ENCODE measurements at regions of chr1 and their contacts with region 1.

Region 1: GRCh38 chr1:53945433-53946251 is at the start of gene IFT25:
- DNase-seq: peak; percentile 87 to 98
- H3K4me3 ChIP-seq: peak within 1 kb of the TSS; percentile 80 to 96
- H3K27ac ChIP-seq: peak within 1 kb of the TSS; percentile 77 to 98
- H3K4me1 ChIP-seq: peaks cover 9 to 16% of the 10 kb centered on the region in 2 donors
- H3K27me3 ChIP-seq: no peaks in the 10 kb centered on the region
- CTCF ChIP-seq: no peak
- total RNA-seq, gene IFT25: not detected

Region 2: GRCh38 chr1:52767596-52768280 is 1177.9 kb before region 1 on chr1:
- intact Hi-C with region 1: no loop called
- DNase-seq: no peak
- H3K4me3 ChIP-seq: no peak overlapping the region
- H3K27ac ChIP-seq: no peak overlapping the region
- H3K4me1 ChIP-seq: no peaks in the 10 kb centered on the region
- H3K27me3 ChIP-seq: no peaks in the 10 kb centered on the region
- CTCF ChIP-seq: no peak

Region 3: DNA sequence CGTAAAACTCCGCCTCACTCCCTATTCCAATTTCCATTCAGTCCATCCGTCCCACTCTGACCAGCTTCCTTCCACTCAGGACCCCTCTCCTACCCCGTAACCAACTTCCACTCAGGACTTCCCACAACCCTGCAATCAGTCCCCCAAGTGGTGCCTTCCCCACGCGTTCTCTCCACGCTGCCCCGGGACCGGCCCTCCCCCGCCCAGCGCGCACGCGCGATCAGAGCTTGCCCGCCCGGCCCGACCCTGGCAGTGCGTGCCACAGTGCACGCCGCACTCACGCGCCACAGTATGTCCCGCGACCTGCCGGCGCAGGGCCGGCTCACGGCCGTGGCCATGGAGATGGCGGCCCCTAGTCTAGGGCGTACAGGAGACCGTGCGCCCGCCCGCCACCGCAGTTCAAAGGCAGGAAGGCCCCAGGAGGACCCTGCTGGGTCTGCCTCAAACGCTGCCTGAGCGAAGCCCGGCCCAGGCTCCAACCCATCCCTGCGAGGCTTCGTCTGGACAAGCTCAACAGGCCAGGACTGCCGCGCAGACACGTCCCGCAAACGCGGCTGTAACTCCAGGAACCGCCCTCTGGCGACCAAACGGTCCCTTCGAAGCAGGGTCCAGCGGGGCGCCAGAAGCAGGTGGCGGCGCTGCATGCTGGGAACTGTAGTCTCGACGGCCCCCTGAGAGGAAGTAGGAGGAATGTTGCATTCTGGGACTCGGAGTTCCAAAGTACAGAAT is 107.6 kb before region 1 on chr1 and contains the start of gene NDC1:
- intact Hi-C with region 1: loop called (anchors 1 kb)
- DNase-seq: peak; percentile 63 to 93
- H3K4me3 ChIP-seq: peak within 1 kb of the TSS; percentile 53 to 83
- H3K27ac ChIP-seq: peak within 1 kb of the TSS; percentile 90 to 97
- H3K4me1 ChIP-seq: peaks cover 0 to 9% of the 10 kb centered on the region in 2 donors
- H3K27me3 ChIP-seq: no peaks in the 10 kb centered on the region
- CTCF ChIP-seq: peak in 1 of 3 experiments; percentile 35
- total RNA-seq, gene NDC1: 9.3 TPM

Region 4: DNA sequence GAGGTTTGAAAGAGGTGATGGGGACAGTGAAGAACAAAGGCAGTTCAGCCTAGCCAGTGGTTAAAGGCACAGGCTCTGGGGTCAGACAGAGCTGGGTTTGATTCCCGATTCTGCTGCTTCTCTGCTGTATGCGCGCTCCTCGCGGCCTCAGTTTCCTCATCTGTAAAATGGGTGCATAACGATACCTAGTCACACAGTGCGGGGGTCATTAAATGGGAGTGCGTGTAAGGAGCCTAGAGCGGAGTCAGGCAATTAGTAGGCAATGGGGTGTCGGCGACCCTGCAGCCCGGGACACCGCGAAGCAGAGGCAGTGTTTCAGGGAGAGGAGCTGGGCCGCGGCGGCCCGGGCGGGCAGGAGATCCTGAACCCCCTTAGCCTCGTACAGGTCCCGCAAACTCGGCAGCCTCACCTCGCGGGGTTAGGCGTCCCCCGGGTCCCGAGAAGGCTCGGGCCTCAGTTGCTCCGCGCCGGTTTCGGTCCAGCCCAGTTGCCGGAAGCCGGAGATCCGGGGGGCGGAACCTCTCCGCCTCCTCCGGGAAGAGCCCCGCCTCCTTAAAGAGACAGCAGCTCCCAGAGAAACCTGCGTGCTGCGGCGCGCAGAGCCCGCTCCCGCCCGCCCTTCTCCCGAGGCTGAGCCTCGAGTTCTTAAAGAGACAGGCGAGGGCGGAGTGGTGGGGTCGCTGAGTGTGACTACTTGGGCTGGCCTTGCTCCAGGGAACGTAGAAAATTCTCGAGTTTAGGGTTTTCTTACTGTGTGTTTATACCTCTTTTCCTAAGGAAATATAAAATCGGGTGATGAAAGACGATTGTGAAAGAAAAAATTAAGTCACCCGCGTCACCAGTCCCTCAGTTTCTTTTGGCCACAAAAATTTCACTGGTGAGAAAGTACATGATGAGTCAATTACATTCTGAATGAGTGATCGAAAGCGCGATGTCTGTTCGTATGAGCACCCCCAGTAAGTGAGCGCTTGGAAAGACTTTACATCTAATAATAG is 56.0 kb before region 1 on chr1 and contains the start of gene YIPF1:
- intact Hi-C with region 1: loop called (anchors 1 kb)
- DNase-seq: peak; percentile 68 to 96
- H3K4me3 ChIP-seq: peak within 1 kb of the TSS; percentile 79 to 83
- H3K27ac ChIP-seq: peak within 1 kb of the TSS; percentile 71 to 87
- H3K4me1 ChIP-seq: peaks cover 7 to 9% of the 10 kb centered on the region in 2 donors
- H3K27me3 ChIP-seq: no peaks in the 10 kb centered on the region
- CTCF ChIP-seq: no peak
- total RNA-seq, gene YIPF1: 17.0 TPM

Region 5: GRCh38 chr1:54542120-54542961 is 596.7 kb after region 1 on chr1:
- intact Hi-C with region 1: loop called (anchors 5 kb)
- DNase-seq: peak; percentile 37 to 83
- H3K4me3 ChIP-seq: peak overlapping the region; percentile 61 to 67
- H3K27ac ChIP-seq: peak overlapping the region; percentile 89 to 92
- H3K4me1 ChIP-seq: peaks cover under 1 to 15% of the 10 kb centered on the region in 2 donors
- H3K27me3 ChIP-seq: no peaks in the 10 kb centered on the region
- CTCF ChIP-seq: peak in 1 of 3 experiments; percentile 15